ENCODE measurements at regions of chr15 and their contacts with region 1.

Region 1: GRCh38 chr15:38652998-38653397 is 88.4 kb upstream of the RASGRP1 start:
- DNase-seq: peak; percentile 22 to 94 (median 93)
- ATAC-seq: peak; percentile 86
- H3K4me3 ChIP-seq: peak overlapping the region; percentile 45
- H3K4me3 Mint-ChIP-seq: peak overlapping the region; percentile 79 to 92 (median 84)
- H3K27ac ChIP-seq: peak overlapping the region; percentile 70
- H3K27ac Mint-ChIP-seq: peak overlapping the region; percentile 93 to 99 (median 96)
- H3K4me1 ChIP-seq: peaks cover 57 to 70% of the 10 kb centered on the region in 2 donors
- H3K4me1 Mint-ChIP-seq: peaks cover 41 to 93% (median 89%) of the 10 kb centered on the region in 7 donors
- H3K27me3 ChIP-seq: no peaks in the 10 kb centered on the region
- H3K27me3 Mint-ChIP-seq: no peaks in the 10 kb centered on the region

Region 2: GRCh38 chr15:38665586-38666305 is 12.7 kb after region 1 on chr15:
- CTCF ChIA-PET with region 1: interaction called, 114 read pairs
- POLR2A ChIA-PET with region 1: interaction called, 548 read pairs
- intact Hi-C with region 1: loop called (anchors 1 kb)
- DNase-seq: peak in 6 of 9 donors; percentile 46 to 54 (median 50)
- ATAC-seq: peak; percentile 55
- H3K4me3 ChIP-seq: no peak overlapping the region
- H3K4me3 Mint-ChIP-seq: peak overlapping the region in 8 of 10 donors; percentile 4 to 71 (median 47)
- H3K27ac ChIP-seq: peak overlapping the region; percentile 58
- H3K27ac Mint-ChIP-seq: peak overlapping the region; percentile 39 to 100 (median 93)
- H3K4me1 ChIP-seq: peaks cover 44 to 79% of the 10 kb centered on the region in 2 donors
- H3K4me1 Mint-ChIP-seq: peaks cover 52 to 94% (median 89%) of the 10 kb centered on the region in 7 donors
- H3K27me3 ChIP-seq: no peaks in the 10 kb centered on the region
- H3K27me3 Mint-ChIP-seq: no peaks in the 10 kb centered on the region

Region 3: GRCh38 chr15:38671675-38672254 is 18.8 kb after region 1 on chr15:
- CTCF ChIA-PET with region 1: interaction called, 114 read pairs
- POLR2A ChIA-PET with region 1: interaction called, 548 read pairs
- intact Hi-C with region 1: loop called (anchors 1 kb)
- DNase-seq: peak in 8 of 9 donors; percentile 55 to 84 (median 66)
- ATAC-seq: peak; percentile 79
- H3K4me3 ChIP-seq: peak overlapping the region; percentile 28
- H3K4me3 Mint-ChIP-seq: peak overlapping the region; percentile 27 to 86 (median 70)
- H3K27ac ChIP-seq: peak overlapping the region; percentile 90
- H3K27ac Mint-ChIP-seq: peak overlapping the region; percentile 93 to 100 (median 98)
- H3K4me1 ChIP-seq: peaks cover 73 to 74% of the 10 kb centered on the region in 2 donors
- H3K4me1 Mint-ChIP-seq: peaks cover 47 to 88% (median 80%) of the 10 kb centered on the region in 7 donors
- H3K27me3 ChIP-seq: no peaks in the 10 kb centered on the region
- H3K27me3 Mint-ChIP-seq: no peaks in the 10 kb centered on the region

Region 4: DNA sequence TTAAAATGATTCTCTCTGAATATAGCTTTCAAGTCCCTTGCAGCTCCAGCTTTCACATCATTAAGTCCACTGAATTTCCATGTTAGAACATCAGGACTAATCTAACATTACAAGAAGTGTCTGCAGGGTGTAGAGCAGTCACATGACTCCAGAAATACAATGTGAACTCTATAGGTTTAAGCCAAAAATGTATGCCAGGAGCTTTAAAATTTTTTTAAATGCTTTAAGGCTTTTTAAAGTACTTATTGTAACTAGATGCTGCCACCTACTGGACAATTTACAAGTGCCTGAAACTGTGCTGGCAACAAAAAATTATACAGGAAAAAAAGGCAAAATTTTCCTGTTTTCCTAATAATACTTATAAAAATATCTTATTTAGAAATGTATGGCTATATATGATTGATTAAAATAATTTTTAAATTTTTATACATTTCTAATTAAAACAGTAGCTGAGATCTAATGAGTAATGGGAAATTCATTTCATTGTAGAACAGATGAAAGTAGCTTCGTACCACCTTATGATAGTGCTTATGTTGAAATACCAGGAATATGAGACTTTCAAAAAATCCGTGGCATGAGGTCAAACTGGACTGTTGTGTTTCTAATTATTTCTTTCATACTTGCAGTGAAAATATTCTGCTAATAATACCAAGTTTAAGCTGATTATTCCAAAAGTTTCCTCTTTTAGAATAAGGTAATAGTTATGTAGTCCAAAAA is 1104.0 kb after region 1 on chr15:
- CTCF ChIA-PET with region 1: no interaction called
- POLR2A ChIA-PET with region 1: no interaction called
- intact Hi-C with region 1: no loop called
- DNase-seq: peak in 6 of 9 donors; percentile 29 to 50 (median 40)
- ATAC-seq: no peak
- H3K4me3 ChIP-seq: no peak overlapping the region
- H3K4me3 Mint-ChIP-seq: no peak overlapping the region
- H3K27ac ChIP-seq: no peak overlapping the region
- H3K27ac Mint-ChIP-seq: no peak overlapping the region
- H3K4me1 ChIP-seq: no peaks in the 10 kb centered on the region
- H3K4me1 Mint-ChIP-seq: no peaks in the 10 kb centered on the region
- H3K27me3 ChIP-seq: no peaks in the 10 kb centered on the region
- H3K27me3 Mint-ChIP-seq: peaks cover 0 to 58% (median 5%) of the 10 kb centered on the region in 5 donors